Right ventricle myocardium inferior (tissue), 1 donor: ENCODE measurements at regions of chr17 and their contacts with region 1.

Region 1: DNA sequence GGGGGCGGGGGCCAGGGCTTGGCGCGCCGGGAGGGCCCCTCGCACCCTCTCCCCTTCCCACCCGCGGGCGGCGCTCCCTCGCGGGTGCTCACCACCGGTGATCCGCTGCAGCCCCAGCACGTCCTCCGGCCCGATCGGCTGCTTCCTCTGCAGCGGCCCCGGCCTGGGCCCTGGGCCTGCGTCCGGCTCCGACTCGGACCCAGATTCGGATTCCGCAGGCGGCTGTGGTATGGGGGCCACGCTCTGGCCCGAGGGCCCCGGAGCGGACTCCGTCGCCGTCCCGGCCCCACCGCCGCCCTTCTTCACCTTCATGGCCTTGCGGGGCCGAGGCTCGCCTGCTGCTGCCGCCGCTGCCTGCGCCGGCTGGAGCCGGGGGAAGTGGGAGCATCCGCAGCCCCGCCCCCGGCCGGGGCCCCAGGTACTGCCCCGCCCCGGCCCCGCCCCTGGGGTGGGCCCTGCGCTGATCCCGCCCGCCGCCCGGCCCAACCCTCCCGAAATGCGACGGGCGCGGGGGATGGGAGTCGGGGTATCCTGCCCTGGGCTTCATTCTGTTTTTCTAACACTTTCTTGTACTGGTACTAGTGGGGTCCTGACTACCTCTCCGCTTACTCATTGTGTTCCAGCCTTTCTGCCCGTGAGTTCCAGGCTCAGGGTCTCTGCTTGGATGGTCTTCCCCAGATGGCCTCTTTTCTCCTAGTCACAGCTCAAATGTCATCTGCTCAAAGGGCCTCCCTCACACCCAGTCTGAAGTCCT is at the start of gene UNC119:
- DNase-seq: peak; percentile 91
- ATAC-seq: peak; percentile 96
- total RNA-seq, gene UNC119: 22.2 TPM

Region 2: GRCh38 chr17:28540231-28540630 is 12.2 kb before region 1 on chr17:
- intact Hi-C with region 1: no loop called
- DNase-seq: no peak
- ATAC-seq: no peak

Region 3: GRCh38 chr17:28571255-28572122 is 19.1 kb after region 1 on chr17 and contains the start of gene PIGS:
- intact Hi-C with region 1: loop called (anchors 2 kb)
- DNase-seq: peak; percentile 98
- ATAC-seq: peak; percentile 92
- total RNA-seq, gene PIGS: 41.1 TPM

Region 4: GRCh38 chr17:28598799-28599310 is 46.4 kb after region 1 on chr17 and contains the start of gene SPAG5:
- intact Hi-C with region 1: loop called (anchors 5 kb)
- DNase-seq: peak; percentile 97
- ATAC-seq: peak; percentile 100
- total RNA-seq, gene SPAG5: 1.6 TPM

Region 5: GRCh38 chr17:28612936-28613872 is 60.8 kb after region 1 on chr17:
- intact Hi-C with region 1: loop called (anchors 2 kb)
- DNase-seq: no peak
- ATAC-seq: peak; percentile 26